ENCODE measurements at regions of chr17 and their contacts with region 1.

Region 1: GRCh38 chr17:59846394-59847165 is 46.2 kb downstream of the TUBD1 start:
- DNase-seq: peak; percentile 51
- H3K4me3 Mint-ChIP-seq: peak overlapping the region; percentile 50
- H3K27ac Mint-ChIP-seq: peak overlapping the region; percentile 94
- H3K4me1 Mint-ChIP-seq: peaks cover 68% of the 10 kb centered on the region
- H3K27me3 Mint-ChIP-seq: no peaks in the 10 kb centered on the region

Region 2: GRCh38 chr17:59435238-59435637 is 411.3 kb before region 1 on chr17:
- intact Hi-C with region 1: loop called (anchors 5 kb)
- DNase-seq: no peak
- H3K4me3 Mint-ChIP-seq: no peak overlapping the region
- H3K27ac Mint-ChIP-seq: peak overlapping the region; percentile 88
- H3K4me1 Mint-ChIP-seq: peaks cover 64% of the 10 kb centered on the region
- H3K27me3 Mint-ChIP-seq: peaks cover 3% of the 10 kb centered on the region

Region 3: DNA sequence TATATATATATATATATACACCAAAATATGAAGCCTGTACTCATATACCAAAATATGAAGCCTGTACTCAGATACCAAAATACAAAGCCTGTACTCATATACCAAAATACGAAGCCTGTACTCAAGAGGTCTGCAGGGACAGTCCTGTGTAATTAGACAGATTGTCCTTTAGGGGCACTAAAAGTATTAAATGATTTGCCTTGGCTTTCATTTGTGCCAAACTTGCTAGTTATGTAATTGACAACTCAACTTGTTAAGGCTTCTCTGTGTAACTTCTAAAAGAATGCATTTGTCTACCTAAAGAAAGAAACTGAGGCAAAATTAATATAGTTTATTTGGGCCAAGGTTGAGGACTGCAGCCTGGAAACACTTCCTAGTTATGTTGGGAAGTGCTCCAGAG is 312.0 kb before region 1 on chr17:
- intact Hi-C with region 1: no loop called
- DNase-seq: no peak
- H3K4me3 Mint-ChIP-seq: no peak overlapping the region
- H3K27ac Mint-ChIP-seq: no peak overlapping the region
- H3K4me1 Mint-ChIP-seq: no peaks in the 10 kb centered on the region
- H3K27me3 Mint-ChIP-seq: peaks cover 22% of the 10 kb centered on the region

Region 4: DNA sequence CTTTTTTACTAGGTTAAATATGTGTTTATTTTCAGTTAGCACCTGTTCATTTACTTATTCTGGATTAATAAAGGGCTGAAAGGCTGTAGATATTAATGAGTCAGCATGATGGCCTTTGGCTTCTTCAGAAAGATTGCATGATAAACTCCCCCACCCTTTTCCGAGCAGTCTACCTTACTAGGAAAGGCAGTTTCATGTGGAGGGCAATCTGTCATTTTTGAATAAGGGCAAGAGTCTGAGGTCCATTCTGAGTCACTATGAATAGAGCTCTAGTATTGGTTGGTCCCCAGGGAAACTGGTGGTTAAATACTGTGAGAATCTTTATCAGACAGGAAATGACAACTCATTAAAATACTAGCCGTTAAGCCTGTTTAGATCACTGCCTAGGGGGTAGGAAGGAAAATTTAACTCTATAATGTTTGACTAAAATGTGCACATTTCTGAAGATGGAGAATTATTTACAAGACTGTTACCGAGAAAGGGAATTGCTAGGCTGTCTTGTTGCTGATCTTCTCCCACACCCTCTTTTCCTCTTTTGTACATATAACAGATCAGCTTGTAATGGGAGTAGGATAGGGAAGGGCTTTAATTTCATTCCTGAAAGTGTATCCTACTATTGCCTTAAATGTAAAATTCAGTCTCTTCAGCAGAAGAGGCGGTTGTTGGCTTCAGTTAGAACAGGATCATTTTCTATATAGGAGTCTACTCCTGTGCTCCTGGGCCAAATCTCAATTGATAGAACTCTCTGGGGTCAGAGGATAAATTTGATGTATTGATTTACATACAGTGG is 17.2 kb before region 1 on chr17:
- intact Hi-C with region 1: loop called (anchors 1 kb)
- DNase-seq: peak; percentile 66
- H3K4me3 Mint-ChIP-seq: peak overlapping the region; percentile 90
- H3K27ac Mint-ChIP-seq: peak overlapping the region; percentile 100
- H3K4me1 Mint-ChIP-seq: peaks cover 79% of the 10 kb centered on the region
- H3K27me3 Mint-ChIP-seq: no peaks in the 10 kb centered on the region

Region 5: GRCh38 chr17:59892924-59893676 is 46.5 kb after region 1 on chr17 and contains the starts of genes RPS6KB1 and TUBD1:
- intact Hi-C with region 1: loop called (anchors 2 kb)
- DNase-seq: peak; percentile 98
- H3K4me3 Mint-ChIP-seq: peak within 1 kb of the TSS; percentile 100
- H3K27ac Mint-ChIP-seq: peak within 1 kb of the TSS; percentile 99
- H3K4me1 Mint-ChIP-seq: peaks cover 58% of the 10 kb centered on the region
- H3K27me3 Mint-ChIP-seq: peaks cover 3% of the 10 kb centered on the region
- total RNA-seq, gene RPS6KB1: 67.6 and 82.7 TPM in 2 replicates
- total RNA-seq, gene TUBD1: 12.3 and 13.2 TPM in 2 replicates

Region 6: GRCh38 chr17:59918975-59919530 is 72.5 kb after region 1 on chr17:
- intact Hi-C with region 1: no loop called
- DNase-seq: no peak
- H3K4me3 Mint-ChIP-seq: no peak overlapping the region
- H3K27ac Mint-ChIP-seq: no peak overlapping the region
- H3K4me1 Mint-ChIP-seq: no peaks in the 10 kb centered on the region
- H3K27me3 Mint-ChIP-seq: no peaks in the 10 kb centered on the region

Region 7: DNA sequence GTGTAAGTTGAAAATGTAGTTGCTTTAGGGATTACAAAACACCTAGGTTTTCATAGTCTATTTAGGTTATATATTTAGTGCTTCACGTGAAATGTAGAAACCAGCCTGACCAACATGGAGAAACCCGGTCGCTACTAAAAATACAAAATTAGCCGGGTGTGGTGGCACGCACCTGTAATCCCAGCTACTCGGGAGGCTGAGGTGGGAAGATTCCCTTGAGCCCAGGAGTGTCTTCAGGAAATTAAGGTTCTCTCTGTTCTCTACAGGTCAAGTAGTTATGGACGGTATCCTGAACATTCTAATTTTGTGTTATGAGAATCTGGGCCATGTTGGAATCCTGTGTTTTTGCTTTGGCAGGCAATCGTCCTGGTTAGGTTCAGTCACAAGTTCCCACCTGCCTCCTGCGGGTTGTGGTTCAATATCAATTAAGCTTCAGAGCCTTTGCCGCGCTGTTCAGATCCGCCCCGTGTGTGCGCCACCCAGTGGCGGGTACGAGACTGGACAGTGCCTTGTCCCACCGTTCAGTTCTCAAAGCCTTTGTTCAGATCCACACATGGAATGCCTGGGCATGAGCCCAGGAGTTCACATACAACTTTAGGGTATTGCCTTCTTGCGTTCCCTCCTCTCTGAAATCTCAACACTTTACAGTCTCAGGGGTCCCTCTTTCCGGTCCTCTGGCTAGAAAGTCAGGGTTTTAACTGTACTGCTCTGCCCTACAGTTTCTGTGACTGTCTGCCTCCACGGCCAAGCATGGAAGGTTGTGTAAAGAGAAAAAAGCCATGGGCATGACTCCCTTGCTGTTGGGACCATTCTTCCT is 190.4 kb after region 1 on chr17:
- intact Hi-C with region 1: loop called (anchors 5 kb)
- DNase-seq: peak; percentile 53
- H3K4me3 Mint-ChIP-seq: peak overlapping the region; percentile 25
- H3K27ac Mint-ChIP-seq: no peak overlapping the region
- H3K4me1 Mint-ChIP-seq: peaks cover 6% of the 10 kb centered on the region
- H3K27me3 Mint-ChIP-seq: peaks cover 15% of the 10 kb centered on the region

Measured in activated T-helper 1 cell treated with anti-CD3 and anti-CD28 coated beads, Interleukin-12 subunit alpha, Interleukin-12 subunit beta, Interleukin-2, Interleukin-4 antibody, amounts not matched to agents 30 ng/mL and 10 ng/mL and 1 ng/mL, durations not matched to agents 14 hours and 24 hours and 36 hours (primary cell).